ENCODE measurements at regions of chr10 and their contacts with region 1.

Region 1: GRCh38 chr10:12400266-12400931 is 51.1 kb downstream of the CAMK1D start:
- DNase-seq: no peak
- CTCF ChIP-seq: no peak

Region 2: DNA sequence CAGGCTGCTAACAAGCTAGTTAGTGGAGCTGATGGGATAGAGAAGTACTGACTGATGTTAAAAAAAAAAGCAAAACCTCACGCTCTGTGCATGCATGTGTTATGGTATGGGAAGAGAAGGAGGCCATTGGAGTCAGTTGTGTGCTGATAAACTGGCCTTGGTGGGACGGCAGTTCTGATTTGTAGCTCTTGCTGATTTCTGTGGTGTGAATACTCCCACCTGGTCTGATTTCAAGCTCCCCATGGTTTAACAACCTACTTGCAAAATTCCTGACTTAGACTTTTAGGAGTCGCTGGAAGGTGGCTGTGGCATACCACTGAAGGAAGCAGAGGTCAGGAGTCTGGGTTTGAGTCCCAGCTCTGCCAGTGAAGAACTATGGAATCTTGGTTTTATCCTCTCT is 35.8 kb before region 1 on chr10:
- CTCF ChIA-PET with region 1: interaction called, 10 read pairs
- POLR2A ChIA-PET with region 1: no interaction called
- DNase-seq: no peak
- CTCF ChIP-seq: no peak

Region 3: DNA sequence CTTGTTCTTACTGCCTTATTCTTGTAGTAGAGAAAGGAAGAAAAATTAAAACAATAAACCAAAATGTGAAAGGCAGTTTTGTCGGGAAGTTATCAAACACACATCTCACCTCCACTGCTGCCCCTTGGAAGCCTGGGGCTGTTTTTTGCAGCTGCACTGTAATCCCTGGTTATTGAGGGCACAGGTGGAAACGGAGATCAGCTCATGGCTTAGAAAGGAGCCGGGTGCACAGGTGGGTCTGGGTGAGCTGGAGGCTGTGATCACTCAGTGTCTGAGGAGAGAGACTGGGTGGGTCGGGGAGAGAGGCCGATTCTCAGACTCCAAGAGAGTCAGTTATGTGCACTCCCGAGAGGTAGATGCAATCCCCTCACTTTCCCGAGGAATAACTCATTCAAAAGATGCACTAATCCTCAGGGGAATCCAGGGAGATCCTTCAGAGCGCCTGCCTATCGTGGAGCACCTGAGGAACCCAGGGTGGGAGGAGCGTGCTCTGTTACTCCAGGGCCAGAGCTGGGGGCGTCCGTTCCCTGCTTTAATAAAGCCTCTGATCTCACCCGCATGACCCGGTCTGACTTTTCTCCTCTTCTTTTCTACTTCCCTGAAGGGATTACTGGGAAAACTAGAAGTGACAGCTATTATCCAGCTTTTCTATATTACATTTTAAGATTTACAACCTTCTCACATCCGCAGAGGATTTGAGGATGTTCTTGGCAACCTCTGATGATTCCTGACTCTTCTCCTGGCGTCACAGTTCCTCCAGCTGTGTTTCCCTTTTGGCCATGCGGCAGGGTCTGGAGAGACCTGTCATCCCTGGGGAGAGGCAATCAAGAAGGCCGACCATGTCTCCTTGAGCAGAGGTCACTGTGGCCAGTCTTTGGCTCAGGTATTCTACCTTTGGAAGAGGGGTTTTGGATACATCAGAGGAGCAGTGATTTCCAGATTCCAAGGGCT is 31.0 kb after region 1 on chr10:
- CTCF ChIA-PET with region 1: no interaction called
- POLR2A ChIA-PET with region 1: no interaction called
- DNase-seq: no peak
- CTCF ChIP-seq: no peak

Measured in GM10248 (cell line).